Keratinocyte (primary cell): ENCODE measurements at regions of chr11 and their contacts with region 1.

Region 1: DNA sequence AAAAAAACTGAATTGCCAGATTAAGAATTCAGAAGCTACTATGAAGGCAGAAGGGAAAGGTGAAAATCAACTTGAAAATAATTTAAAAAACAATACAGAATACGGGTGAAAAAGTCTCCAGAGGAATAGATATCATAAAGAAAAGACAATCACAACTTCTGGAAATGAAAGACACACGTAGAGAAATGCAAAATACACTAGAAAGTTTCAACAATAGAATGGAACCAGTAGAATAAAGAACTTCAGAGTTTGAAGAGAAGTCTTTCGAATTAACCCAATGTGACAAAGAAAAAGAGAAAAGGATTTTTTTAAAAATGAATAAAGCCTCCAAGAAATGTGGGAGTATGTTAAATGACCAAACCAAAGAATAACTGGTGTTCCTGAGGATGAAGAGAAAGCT is 263.8 kb upstream of the FAT3 start:
- DNase-seq: no peak
- H3K4me3 ChIP-seq: no peak overlapping the region
- H3K27ac ChIP-seq: no peak overlapping the region
- H3K4me1 ChIP-seq: no peaks in the 10 kb centered on the region
- H3K27me3 ChIP-seq: no peaks in the 10 kb centered on the region
- CTCF ChIP-seq: no peak

Region 2: GRCh38 chr11:91997226-91997625 is 36.5 kb after region 1 on chr11:
- dilution Hi-C with region 1: loop called (anchors 5 kb)
- DNase-seq: no peak
- H3K4me3 ChIP-seq: no peak overlapping the region
- H3K27ac ChIP-seq: no peak overlapping the region
- H3K4me1 ChIP-seq: no peaks in the 10 kb centered on the region
- H3K27me3 ChIP-seq: no peaks in the 10 kb centered on the region
- CTCF ChIP-seq: no peak